ENCODE measurements at regions of chr12 and their contacts with region 1.

Region 1: GRCh38 chr12:109775172-109775881 is 57.9 kb downstream of the TRPV4 start:
- DNase-seq: peak; percentile 87
- ATAC-seq: peak; percentile 86
- H3K4me3 Mint-ChIP-seq: no peak overlapping the region
- H3K27ac Mint-ChIP-seq: no peak overlapping the region
- H3K4me1 Mint-ChIP-seq: peaks cover 20% of the 10 kb centered on the region
- H3K27me3 Mint-ChIP-seq: no peaks in the 10 kb centered on the region
- CTCF ChIP-seq: peak; percentile 67

Region 2: DNA sequence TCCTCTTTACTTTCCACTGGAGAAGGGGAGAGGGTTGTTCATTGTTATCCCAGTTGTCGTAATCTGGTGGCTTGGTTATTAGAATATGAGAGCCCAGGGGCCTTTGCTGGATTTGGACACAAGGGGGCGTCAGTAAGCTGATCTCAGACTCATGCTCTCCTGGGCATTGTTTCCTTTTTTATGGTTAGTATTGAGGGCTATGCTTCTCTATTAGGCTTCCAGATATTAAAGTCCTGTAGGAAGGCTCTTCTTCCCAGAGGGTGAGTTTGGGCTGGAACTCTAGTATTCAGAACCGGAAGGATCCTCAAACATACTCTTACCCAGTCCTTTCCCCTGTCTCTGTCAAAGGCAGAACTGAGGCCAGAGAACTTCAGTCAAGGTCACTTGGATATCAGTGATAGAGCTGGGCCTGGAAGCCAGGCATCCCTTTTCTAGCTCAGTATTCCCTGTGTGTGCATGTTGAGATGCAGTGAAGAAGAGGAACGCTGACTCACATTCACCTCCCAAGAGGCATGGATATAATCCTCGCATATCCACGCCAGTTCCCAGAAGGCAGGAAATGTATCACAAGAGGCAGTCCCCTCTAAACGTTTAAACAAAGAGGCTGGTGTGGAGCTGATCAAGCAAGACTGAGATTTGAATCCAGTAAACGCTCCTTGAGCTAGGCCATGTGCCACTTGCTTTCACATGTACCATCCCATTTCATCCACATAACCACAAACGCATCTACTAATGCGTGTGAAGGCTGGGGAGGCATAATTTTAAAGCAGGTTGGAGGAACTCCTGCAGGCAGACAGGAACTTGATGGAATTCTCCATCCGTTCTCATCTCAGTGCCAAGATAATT is 256.3 kb before region 1 on chr12:
- CTCF ChIA-PET with region 1: interaction called, 31 read pairs
- POLR2A ChIA-PET with region 1: no interaction called
- DNase-seq: peak; percentile 70
- ATAC-seq: peak; percentile 80
- H3K4me3 Mint-ChIP-seq: no peak overlapping the region
- H3K27ac Mint-ChIP-seq: peak overlapping the region; percentile 84; the same call in 1 of the 2 replicates
- H3K4me1 Mint-ChIP-seq: peaks cover 6% of the 10 kb centered on the region
- H3K27me3 Mint-ChIP-seq: no peaks in the 10 kb centered on the region
- CTCF ChIP-seq: peak; percentile 72; the same call in 1 of the 2 replicates

Region 3: GRCh38 chr12:109719236-109720022 is 55.9 kb before region 1 on chr12:
- CTCF ChIA-PET with region 1: interaction called, 24 read pairs
- POLR2A ChIA-PET with region 1: interaction called, 3 read pairs
- DNase-seq: peak; percentile 45
- ATAC-seq: peak; percentile 57
- H3K4me3 Mint-ChIP-seq: peak overlapping the region; percentile 50
- H3K27ac Mint-ChIP-seq: peak overlapping the region; percentile 77; the same call in 1 of the 2 replicates
- H3K4me1 Mint-ChIP-seq: peaks cover 25% of the 10 kb centered on the region
- H3K27me3 Mint-ChIP-seq: peaks cover 41% of the 10 kb centered on the region
- CTCF ChIP-seq: no peak

Region 4: DNA sequence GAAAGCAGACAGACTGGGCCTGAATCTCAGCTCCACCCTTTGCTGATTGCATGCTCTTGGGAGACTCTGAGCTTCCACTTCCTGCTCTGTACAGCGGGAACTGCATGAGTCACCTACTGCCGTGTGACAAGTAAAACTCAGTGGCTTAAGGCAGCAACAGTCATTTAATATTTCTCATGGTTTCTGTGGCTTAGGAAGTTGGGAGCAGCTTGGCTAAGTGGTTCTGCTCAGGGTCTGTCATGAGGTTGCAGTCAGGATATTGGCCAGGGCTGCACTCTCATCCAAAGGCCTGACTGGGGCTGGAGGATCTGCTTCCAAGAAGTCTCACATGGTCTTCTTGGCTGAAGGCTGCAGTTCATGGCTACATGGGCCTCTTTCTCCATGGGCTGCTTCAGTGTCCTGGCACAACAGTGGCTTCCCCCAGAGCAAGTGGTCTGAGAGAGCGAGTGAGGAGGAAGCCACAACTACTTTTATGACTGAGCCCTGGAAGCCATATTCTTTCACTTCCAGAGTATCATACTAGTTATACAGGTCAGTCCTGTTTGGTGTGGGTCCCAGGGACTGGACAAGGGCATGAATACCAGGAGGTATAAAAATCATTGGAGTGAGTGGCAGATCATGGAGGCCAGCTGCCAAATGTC is 12.0 kb before region 1 on chr12:
- CTCF ChIA-PET with region 1: interaction called, 11 read pairs
- POLR2A ChIA-PET with region 1: no interaction called
- DNase-seq: no peak
- ATAC-seq: no peak
- H3K4me3 Mint-ChIP-seq: no peak overlapping the region
- H3K27ac Mint-ChIP-seq: no peak overlapping the region
- H3K4me1 Mint-ChIP-seq: peaks cover 10% of the 10 kb centered on the region
- H3K27me3 Mint-ChIP-seq: no peaks in the 10 kb centered on the region
- CTCF ChIP-seq: no peak

Region 5: DNA sequence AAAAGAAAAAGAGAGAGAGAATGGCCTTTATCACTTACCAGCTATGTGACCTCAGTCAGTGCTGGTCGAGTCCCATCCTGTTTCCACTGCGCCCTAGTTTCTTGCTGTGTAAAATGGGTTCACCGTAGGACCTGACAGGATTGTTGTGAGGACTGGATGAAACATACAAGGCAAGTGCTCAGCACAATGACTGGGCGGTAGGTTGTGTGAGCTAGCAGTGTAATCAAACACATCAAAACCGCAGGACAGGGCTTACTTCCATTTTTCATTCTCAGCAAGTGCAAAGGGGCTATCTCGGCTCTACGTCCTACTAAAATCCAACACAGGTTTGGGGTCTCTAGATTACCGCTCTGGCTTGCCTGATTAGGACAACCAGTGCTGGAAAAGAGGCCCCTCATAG is 1860.2 kb after region 1 on chr12:
- CTCF ChIA-PET with region 1: no interaction called
- POLR2A ChIA-PET with region 1: no interaction called
- DNase-seq: no peak
- ATAC-seq: no peak; the same call in 1 of the 2 replicates
- H3K4me3 Mint-ChIP-seq: no peak overlapping the region
- H3K27ac Mint-ChIP-seq: peak overlapping the region; percentile 78
- H3K4me1 Mint-ChIP-seq: peaks cover 23% of the 10 kb centered on the region
- H3K27me3 Mint-ChIP-seq: no peaks in the 10 kb centered on the region
- CTCF ChIP-seq: no peak